Natural killer cell (primary cell): ENCODE measurements at regions of chr14 and their contacts with region 1.

Region 1: GRCh38 chr14:75522224-75522982 is at the start of gene BATF:
- DNase-seq: peak; percentile 62 to 90
- ATAC-seq: peak; percentile 73 to 85 (median 82)
- H3K4me3 ChIP-seq: peak within 1 kb of the TSS; percentile 71
- H3K4me3 Mint-ChIP-seq: peak within 1 kb of the TSS; percentile 100
- H3K27ac ChIP-seq: peak within 1 kb of the TSS; percentile 86
- H3K27ac Mint-ChIP-seq: peak within 1 kb of the TSS; percentile 98 to 99
- H3K4me1 ChIP-seq: peaks cover 41% of the 10 kb centered on the region
- H3K4me1 Mint-ChIP-seq: peaks cover 60 to 64% of the 10 kb centered on the region in 2 donors
- H3K27me3 ChIP-seq: no peaks in the 10 kb centered on the region
- H3K27me3 Mint-ChIP-seq: no peaks in the 10 kb centered on the region
- CTCF ChIP-seq: no peak
- total RNA-seq, gene BATF: 12.6 to 32.5 (median 21.4) TPM

Region 2: GRCh38 chr14:75542588-75543091 is 20.2 kb after region 1 on chr14:
- intact Hi-C with region 1: loop called (anchors 2 kb)
- DNase-seq: peak; percentile 61 to 89
- ATAC-seq: peak; percentile 95 to 96 (median 95)
- H3K4me3 ChIP-seq: no peak overlapping the region
- H3K4me3 Mint-ChIP-seq: peak overlapping the region; percentile 80
- H3K27ac ChIP-seq: peak overlapping the region; percentile 86
- H3K27ac Mint-ChIP-seq: peak overlapping the region; percentile 94 to 98
- H3K4me1 ChIP-seq: peaks cover 51% of the 10 kb centered on the region
- H3K4me1 Mint-ChIP-seq: peaks cover 23 to 46% of the 10 kb centered on the region in 2 donors
- H3K27me3 ChIP-seq: no peaks in the 10 kb centered on the region
- H3K27me3 Mint-ChIP-seq: no peaks in the 10 kb centered on the region
- CTCF ChIP-seq: no peak

Region 3: GRCh38 chr14:75560962-75561432 is 38.6 kb after region 1 on chr14:
- intact Hi-C with region 1: loop called (anchors 5 kb)
- DNase-seq: peak; percentile 26 to 76
- ATAC-seq: peak in 2 of 3 donors; percentile 64 to 77
- H3K4me3 ChIP-seq: no peak overlapping the region
- H3K4me3 Mint-ChIP-seq: no peak overlapping the region
- H3K27ac ChIP-seq: no peak overlapping the region
- H3K27ac Mint-ChIP-seq: no peak overlapping the region
- H3K4me1 ChIP-seq: peaks cover 5% of the 10 kb centered on the region
- H3K4me1 Mint-ChIP-seq: peaks cover under 1 to 7% of the 10 kb centered on the region in 2 donors
- H3K27me3 ChIP-seq: no peaks in the 10 kb centered on the region
- H3K27me3 Mint-ChIP-seq: no peaks in the 10 kb centered on the region
- CTCF ChIP-seq: peak; percentile 81